Activated CD4-positive, alpha-beta T cell treated with anti-CD3 and anti-CD28 coated beads, Interleukin-2, amount 10 ng/mL, durations not matched to agents 24 days and 14 days (primary cell): ENCODE measurements at regions of chr5 and their contacts with region 1.

Region 1: DNA sequence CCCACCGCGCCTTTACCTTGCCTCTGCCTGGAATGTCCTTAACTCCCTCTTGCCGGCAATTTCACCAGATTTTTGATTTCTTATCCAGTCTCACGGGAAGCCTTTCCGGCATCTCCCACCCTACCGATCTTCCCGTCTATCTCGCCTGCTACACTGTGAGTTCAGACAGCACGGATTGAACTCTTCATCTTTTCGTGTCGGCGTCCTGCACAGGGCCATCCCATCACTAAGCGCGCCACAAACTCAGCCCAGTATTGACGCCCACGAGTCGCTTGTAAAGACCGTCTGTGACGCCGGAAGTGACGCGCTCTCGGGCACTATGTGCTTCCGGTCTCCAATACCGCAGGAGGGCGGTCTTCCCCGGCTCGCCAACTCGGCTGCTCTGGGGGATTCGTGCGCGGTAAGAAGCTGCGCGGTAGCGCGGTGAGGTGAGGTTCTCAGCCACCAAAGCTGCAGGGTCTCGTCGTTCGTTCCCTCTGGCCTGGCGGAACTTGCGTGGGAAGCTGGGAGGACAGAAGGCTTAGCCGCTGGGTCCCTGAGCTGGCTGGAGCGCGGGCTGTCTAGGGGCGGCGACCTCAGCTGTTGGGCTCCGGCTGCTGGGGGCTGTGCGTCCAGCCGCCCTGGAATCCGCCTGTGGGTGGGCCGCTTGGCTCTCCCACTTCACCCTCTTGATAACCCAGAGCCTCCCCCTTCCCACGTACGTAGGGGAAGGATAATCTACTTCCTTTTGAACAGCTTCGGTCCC is at the start of gene ZCCHC9:
- DNase-seq: peak; percentile 98
- H3K4me3 Mint-ChIP-seq: peak within 1 kb of the TSS; percentile 90
- H3K27ac Mint-ChIP-seq: peak within 1 kb of the TSS; percentile 96
- H3K4me1 Mint-ChIP-seq: peaks cover 33% of the 10 kb centered on the region
- H3K27me3 Mint-ChIP-seq: no peaks in the 10 kb centered on the region
- total RNA-seq, gene ZCCHC9: 48.5 and 49.7 TPM in 2 replicates

Region 2: DNA sequence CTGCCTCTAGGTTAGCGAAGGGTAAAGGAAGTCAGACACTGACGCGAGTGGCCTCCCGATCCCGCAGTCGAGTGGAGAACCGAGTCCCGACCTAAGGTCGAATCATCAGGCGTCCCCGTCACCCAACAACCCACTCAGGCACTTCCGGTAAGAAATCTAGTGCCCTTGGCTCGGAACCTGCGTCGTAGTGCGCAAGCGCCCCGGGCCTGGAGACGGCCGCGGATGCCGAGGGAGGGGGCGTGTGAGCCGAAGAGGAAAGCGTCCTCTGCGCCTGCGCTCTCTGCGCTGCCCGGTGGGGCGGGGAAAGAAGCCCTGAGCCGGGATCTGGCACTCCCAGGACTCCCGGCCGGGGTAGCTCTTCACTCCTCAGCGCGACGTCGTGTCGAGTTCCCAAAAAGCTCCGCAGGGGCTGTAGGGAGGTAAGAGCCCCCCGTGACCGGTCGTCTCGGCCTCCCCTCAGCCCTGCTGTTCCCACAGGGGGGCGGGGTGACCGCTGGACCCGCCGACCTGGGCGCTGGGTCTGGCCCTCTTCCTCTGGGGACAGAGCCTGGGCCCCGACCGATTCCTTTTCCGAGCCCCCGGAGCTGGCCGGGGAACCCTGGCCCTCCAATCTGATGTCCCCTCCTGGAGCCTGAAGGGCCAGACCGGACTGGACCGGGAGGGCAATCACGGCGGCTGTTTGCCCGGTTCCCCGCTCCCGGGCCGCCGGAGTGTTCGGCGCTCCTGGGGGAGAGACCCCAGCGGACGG is 893.5 kb before region 1 on chr5 and contains the start of gene ZFYVE16:
- intact Hi-C with region 1: loop called (anchors 5 kb)
- DNase-seq: peak; percentile 99
- H3K4me3 Mint-ChIP-seq: peak within 1 kb of the TSS; percentile 97
- H3K27ac Mint-ChIP-seq: peak within 1 kb of the TSS; percentile 99
- H3K4me1 Mint-ChIP-seq: peaks cover 15% of the 10 kb centered on the region
- H3K27me3 Mint-ChIP-seq: peaks cover 7% of the 10 kb centered on the region
- total RNA-seq, gene ZFYVE16: 8.1 and 9.4 TPM in 2 replicates

Region 3: GRCh38 chr5:80686757-80687156 is 614.7 kb before region 1 on chr5:
- intact Hi-C with region 1: loop called (anchors 10 kb)
- DNase-seq: no peak
- H3K4me3 Mint-ChIP-seq: no peak overlapping the region
- H3K27ac Mint-ChIP-seq: no peak overlapping the region
- H3K4me1 Mint-ChIP-seq: peaks cover 20% of the 10 kb centered on the region
- H3K27me3 Mint-ChIP-seq: no peaks in the 10 kb centered on the region

Region 4: GRCh38 chr5:80960531-80961375 is 340.7 kb before region 1 on chr5:
- intact Hi-C with region 1: loop called (anchors 5 kb)
- DNase-seq: peak; percentile 84
- H3K4me3 Mint-ChIP-seq: peak overlapping the region; percentile 89
- H3K27ac Mint-ChIP-seq: peak overlapping the region; percentile 82
- H3K4me1 Mint-ChIP-seq: peaks cover 48% of the 10 kb centered on the region
- H3K27me3 Mint-ChIP-seq: peaks cover 5% of the 10 kb centered on the region

Region 5: GRCh38 chr5:81251922-81252321 is 49.5 kb before region 1 on chr5:
- intact Hi-C with region 1: no loop called
- DNase-seq: no peak
- H3K4me3 Mint-ChIP-seq: no peak overlapping the region
- H3K27ac Mint-ChIP-seq: no peak overlapping the region
- H3K4me1 Mint-ChIP-seq: no peaks in the 10 kb centered on the region
- H3K27me3 Mint-ChIP-seq: no peaks in the 10 kb centered on the region

Region 6: DNA sequence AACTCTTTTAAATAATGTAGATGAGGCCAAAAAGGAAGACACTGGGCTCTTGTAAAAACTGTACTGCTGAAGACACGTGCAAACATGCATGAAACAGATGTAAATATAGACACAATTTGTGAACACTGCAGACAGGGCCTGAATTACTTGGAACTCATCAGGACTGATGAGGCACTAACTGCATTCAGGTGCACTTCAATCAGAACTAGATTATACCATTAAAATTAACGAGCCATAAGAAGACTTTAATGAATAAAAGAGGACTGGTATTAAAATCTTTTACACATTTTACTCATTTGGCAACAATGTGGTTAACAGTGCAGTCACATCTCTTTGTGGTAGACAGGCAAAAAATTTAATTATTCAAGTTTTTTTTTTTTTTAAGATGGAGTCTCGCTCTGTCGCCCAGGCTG is 13.4 kb before region 1 on chr5:
- intact Hi-C with region 1: loop called (anchors 2 kb)
- DNase-seq: no peak
- H3K4me3 Mint-ChIP-seq: no peak overlapping the region
- H3K27ac Mint-ChIP-seq: no peak overlapping the region
- H3K4me1 Mint-ChIP-seq: peaks cover 16% of the 10 kb centered on the region
- H3K27me3 Mint-ChIP-seq: no peaks in the 10 kb centered on the region

Region 7: DNA sequence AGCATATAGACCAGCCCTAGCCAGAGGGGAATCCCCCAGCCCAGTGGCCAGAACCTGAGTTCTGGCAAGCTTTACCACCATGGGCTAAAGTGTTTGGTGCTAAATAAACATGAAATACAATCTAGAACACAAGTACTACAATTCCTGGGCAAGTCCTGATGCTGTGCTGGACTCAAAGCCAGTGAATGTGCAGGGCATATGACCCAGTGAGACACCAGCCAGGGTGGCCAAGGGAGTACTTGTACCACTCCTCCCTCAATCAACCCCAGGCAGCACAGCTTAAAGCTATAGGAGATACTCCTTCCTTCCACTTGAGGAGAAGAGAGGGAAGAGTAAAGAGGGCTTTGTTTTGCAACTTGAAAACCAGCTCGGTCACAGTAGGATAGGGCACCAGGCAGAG is 385.8 kb after region 1 on chr5:
- intact Hi-C with region 1: no loop called
- DNase-seq: no peak
- H3K4me3 Mint-ChIP-seq: no peak overlapping the region
- H3K27ac Mint-ChIP-seq: no peak overlapping the region
- H3K4me1 Mint-ChIP-seq: no peaks in the 10 kb centered on the region
- H3K27me3 Mint-ChIP-seq: no peaks in the 10 kb centered on the region

Region 8: GRCh38 chr5:81851481-81852178 is 550.2 kb after region 1 on chr5:
- intact Hi-C with region 1: loop called (anchors 5 kb)
- DNase-seq: peak; percentile 98
- H3K4me3 Mint-ChIP-seq: peak overlapping the region; percentile 88
- H3K27ac Mint-ChIP-seq: peak overlapping the region; percentile 92
- H3K4me1 Mint-ChIP-seq: peaks cover 40% of the 10 kb centered on the region
- H3K27me3 Mint-ChIP-seq: no peaks in the 10 kb centered on the region

Region 9: DNA sequence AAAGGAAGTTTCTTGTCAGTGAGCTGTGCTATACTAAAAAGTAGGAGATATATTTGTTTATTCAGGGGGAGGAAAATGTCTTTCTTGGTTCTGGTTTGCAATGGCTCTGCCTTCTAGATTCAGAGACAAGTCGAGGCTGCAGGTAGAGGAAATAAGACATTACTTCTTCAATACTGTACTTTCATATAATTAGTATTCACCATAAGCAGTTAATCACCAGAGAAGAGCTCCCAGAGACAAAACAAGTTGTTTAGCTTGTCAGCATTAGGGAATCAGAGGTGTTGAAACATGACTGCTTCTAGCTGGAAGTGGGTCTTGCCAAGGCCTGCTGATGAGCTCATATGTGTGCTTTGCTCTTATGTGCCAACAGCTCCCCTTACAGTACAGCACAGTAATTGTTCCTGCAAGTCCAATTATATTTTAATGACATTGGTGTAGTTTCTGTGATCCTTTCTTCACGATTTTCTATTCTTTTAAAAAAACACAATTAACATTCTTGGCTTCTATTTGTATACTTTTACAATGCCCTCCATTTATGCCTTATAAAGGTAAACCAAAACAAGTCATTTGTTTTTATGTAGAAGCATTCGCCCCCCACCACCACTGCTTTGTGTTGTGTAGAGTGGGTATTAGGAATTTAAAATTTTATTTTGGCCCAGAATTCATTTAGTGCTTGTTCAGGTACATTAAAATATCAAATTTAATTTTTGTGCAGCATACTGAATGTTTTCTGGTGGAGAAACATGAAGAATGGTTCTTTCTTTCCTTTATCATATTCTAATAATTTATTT is 864.5 kb after region 1 on chr5:
- intact Hi-C with region 1: loop called (anchors 10 kb)
- DNase-seq: peak; percentile 76
- H3K4me3 Mint-ChIP-seq: no peak overlapping the region
- H3K27ac Mint-ChIP-seq: no peak overlapping the region
- H3K4me1 Mint-ChIP-seq: peaks cover 5% of the 10 kb centered on the region
- H3K27me3 Mint-ChIP-seq: no peaks in the 10 kb centered on the region